ENCODE measurements at regions of chr21 and their contacts with region 1.

Region 1: GRCh38 chr21:33641336-33642026 is at the start of gene CRYZL1:
- DNase-seq: peak; percentile 100
- H3K4me3 Mint-ChIP-seq: peak within 1 kb of the TSS; percentile 88
- H3K27ac Mint-ChIP-seq: peak within 1 kb of the TSS; percentile 94
- H3K4me1 Mint-ChIP-seq: peaks cover 20% of the 10 kb centered on the region
- H3K27me3 Mint-ChIP-seq: peaks cover 27% of the 10 kb centered on the region
- total RNA-seq, gene CRYZL1: 26.3 and 34.8 TPM in 2 replicates

Region 2: DNA sequence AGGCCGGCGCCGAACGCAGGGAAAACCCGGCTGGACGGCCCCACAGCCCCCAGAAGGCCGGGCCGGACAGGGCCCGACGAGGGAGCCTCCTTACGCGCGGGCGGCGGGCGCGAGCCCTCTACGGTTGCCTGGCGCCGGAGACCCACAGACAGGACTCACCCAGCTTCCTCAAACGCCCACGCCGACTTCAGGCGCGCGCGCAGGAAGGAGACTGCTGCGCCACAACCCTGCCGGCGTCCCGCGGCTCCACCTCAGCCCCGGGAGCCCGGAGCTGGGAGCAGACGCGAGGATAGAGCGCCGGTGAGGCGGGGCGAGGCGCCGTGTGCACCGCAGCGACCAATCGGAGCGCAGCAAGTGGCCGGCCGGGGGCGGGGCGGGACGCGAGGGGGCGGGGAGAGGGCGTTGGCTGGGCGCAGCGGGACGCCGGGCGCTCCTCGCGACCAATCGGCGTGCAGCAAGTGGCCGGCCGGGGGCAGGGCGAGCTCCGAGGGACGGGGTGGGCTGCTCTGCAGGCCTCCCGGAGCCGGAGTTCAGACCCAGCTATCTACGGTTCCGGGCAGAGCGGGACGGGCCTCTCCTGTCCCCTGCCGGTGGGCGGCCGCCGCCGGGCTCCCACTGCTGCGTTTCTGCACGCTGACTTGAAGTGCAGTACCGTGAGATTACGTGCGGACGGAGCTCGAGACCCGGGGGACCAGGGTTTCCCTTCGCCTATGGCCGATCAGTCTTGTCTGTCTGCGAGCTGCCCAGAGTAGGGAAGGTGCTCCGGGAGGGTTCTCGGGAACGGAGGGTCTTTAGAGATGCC is 161.6 kb before region 1 on chr21 and contains the start of gene TMEM50B:
- intact Hi-C with region 1: loop called (anchors 2 kb)
- DNase-seq: peak; percentile 98
- H3K4me3 Mint-ChIP-seq: peak within 1 kb of the TSS; percentile 93
- H3K27ac Mint-ChIP-seq: peak within 1 kb of the TSS; percentile 93
- H3K4me1 Mint-ChIP-seq: peaks cover 15% of the 10 kb centered on the region
- H3K27me3 Mint-ChIP-seq: peaks cover 14% of the 10 kb centered on the region
- total RNA-seq, gene TMEM50B: 14.4 and 16.4 TPM in 2 replicates

Region 3: DNA sequence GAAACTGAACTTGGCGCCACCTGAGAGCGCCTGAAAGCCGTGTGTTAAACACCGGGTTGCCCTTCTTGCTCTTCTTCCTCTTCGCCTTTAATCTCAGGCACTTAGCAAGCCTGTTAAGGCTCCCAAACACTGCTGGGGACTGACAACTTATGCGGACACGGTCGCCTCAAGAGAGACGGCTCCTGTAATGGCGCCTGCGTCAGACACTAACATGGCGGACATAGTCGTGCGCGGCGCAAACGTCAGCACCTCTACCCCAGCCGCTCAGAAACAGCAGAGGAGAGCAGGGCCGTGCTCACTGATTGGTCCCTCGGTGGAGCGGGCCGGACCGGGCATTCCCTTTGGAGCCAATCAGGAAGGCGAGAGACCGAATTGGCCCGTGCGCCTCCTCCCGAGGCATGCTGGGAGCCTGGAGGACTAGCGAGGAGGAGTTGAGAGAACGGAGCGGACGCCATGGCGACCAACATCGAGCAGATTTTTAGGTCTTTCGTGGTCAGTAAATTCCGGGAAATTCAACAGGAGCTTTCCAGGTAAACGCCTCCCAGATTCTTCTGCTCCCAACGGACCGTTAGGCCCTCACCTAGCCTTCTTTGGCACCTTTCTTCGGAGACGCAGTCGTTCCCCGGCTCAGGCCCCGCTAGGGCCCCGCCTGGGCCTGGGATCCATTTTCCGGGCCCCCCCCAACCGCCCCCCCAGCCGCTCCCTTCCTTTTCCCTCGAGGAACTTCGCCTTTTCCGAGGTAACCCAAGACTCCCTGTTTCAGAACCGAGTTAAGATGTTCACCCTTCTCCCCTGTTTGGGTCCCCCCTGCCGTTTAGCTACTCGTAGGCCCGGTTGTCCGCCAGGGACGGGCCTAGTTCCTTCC is 98.6 kb before region 1 on chr21 and contains the start of gene SON:
- intact Hi-C with region 1: loop called (anchors 1 kb)
- DNase-seq: peak; percentile 99
- H3K4me3 Mint-ChIP-seq: peak within 1 kb of the TSS; percentile 95
- H3K27ac Mint-ChIP-seq: peak within 1 kb of the TSS; percentile 100
- H3K4me1 Mint-ChIP-seq: peaks cover 34% of the 10 kb centered on the region
- H3K27me3 Mint-ChIP-seq: no peaks in the 10 kb centered on the region
- total RNA-seq, gene SON: 351 and 363 TPM in 2 replicates

Region 4: GRCh38 chr21:33598051-33598450 is 43.4 kb before region 1 on chr21:
- intact Hi-C with region 1: no loop called
- DNase-seq: no peak
- H3K4me3 Mint-ChIP-seq: no peak overlapping the region
- H3K27ac Mint-ChIP-seq: no peak overlapping the region
- H3K4me1 Mint-ChIP-seq: no peaks in the 10 kb centered on the region
- H3K27me3 Mint-ChIP-seq: no peaks in the 10 kb centered on the region

Region 5: GRCh38 chr21:33780631-33781030 is 139.2 kb after region 1 on chr21:
- intact Hi-C with region 1: no loop called
- DNase-seq: no peak
- H3K4me3 Mint-ChIP-seq: no peak overlapping the region
- H3K27ac Mint-ChIP-seq: no peak overlapping the region
- H3K4me1 Mint-ChIP-seq: no peaks in the 10 kb centered on the region
- H3K27me3 Mint-ChIP-seq: no peaks in the 10 kb centered on the region

Region 6: GRCh38 chr21:33915368-33916199 is 274.1 kb after region 1 on chr21 and contains the start of gene ATP5PO:
- intact Hi-C with region 1: loop called (anchors 1 kb)
- DNase-seq: peak; percentile 99
- H3K4me3 Mint-ChIP-seq: peak within 1 kb of the TSS; percentile 99
- H3K27ac Mint-ChIP-seq: peak within 1 kb of the TSS; percentile 99
- H3K4me1 Mint-ChIP-seq: peaks cover 30% of the 10 kb centered on the region
- H3K27me3 Mint-ChIP-seq: peaks cover 2% of the 10 kb centered on the region
- total RNA-seq, gene ATP5PO: 172 and 194 TPM in 2 replicates